ENCODE measurements at regions of chrX and their contacts with region 1.

Region 1: GRCh38 chrX:152904151-152905080 is 6.5 kb downstream of the ZNF185 start:
- H3K4me3 ChIP-seq: no peak overlapping the region
- H3K27ac ChIP-seq: no peak overlapping the region
- H3K4me1 ChIP-seq: no peaks in the 10 kb centered on the region
- CTCF ChIP-seq: peak; percentile 82

Region 2: GRCh38 chrX:152738560-152738959 is 165.9 kb before region 1 on chrX:
- CTCF ChIA-PET with region 1: no interaction called
- POLR2A ChIA-PET with region 1: no interaction called
- H3K4me3 ChIP-seq: no peak overlapping the region
- H3K27ac ChIP-seq: no peak overlapping the region
- H3K4me1 ChIP-seq: no peaks in the 10 kb centered on the region
- CTCF ChIP-seq: no peak

Region 3: DNA sequence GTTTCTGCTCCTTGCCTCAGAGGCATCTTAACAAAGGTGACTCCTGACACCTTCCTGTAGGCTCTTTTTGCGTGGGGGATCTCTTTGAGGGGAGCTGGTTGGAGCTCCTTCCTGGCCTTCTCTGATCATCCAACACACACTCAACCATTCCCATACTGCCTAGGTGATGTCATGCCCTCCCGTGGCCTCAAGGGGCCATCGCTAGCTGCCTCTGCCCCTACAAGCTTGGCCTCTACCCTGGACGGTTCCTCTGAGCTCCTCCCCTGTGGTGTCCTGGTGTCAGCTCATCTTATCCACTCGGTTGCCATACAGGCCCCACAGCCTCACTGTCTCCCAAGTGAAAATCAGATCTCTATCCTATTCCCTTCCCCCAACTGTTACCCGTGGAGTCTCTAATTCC is 20.2 kb before region 1 on chrX:
- CTCF ChIA-PET with region 1: interaction called, 12 read pairs
- POLR2A ChIA-PET with region 1: no interaction called
- H3K4me3 ChIP-seq: no peak overlapping the region
- H3K27ac ChIP-seq: no peak overlapping the region
- H3K4me1 ChIP-seq: no peaks in the 10 kb centered on the region
- CTCF ChIP-seq: no peak

Region 4: DNA sequence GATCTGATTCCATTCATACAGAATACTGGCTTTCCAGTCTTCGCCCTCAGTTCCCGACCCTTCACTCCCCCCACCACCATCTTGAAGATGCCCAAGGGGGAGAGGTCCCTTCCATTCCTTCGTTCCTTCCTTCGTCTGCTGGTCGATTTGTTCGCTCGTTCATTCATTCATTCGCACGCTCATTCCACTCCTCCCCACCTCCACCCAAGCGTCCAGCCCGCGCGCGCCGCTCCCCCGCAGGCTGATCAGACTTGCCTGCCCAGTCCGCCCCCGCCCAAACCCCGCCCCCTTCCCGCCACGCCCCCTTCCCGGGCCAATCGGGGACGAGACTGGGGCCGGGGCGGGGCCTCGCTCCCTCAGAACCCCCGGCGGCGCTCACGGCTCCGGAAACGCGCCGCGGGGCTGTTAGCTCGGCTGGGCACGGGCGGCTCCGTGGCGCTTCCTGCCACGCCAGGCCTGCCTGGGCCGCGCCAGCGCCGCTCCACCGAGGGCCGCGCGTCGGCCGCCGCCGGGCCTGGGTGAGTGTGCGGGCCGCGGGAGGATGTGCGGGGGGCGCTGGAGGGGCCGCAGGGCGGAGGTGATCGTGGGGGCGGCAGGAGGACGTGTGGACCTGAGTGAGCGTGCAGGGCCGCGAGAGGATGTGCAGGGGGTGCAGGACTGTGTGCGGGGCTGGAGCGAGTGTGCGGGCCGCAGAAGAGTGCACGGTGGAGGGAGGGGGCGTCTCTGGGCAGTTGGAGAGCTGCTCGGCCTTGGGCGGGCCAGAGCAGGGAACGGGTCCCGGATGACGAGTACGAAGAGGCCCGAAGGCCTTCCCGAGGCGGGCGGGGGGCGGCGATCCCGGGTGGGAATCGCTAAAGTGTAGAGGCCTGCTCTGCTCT is 429.6 kb after region 1 on chrX and contains the start of gene ZNF275:
- CTCF ChIA-PET with region 1: no interaction called
- POLR2A ChIA-PET with region 1: no interaction called
- H3K4me3 ChIP-seq: peak within 1 kb of the TSS; percentile 72
- H3K27ac ChIP-seq: peak within 1 kb of the TSS; percentile 71; the same call in 1 of the 2 replicates
- H3K4me1 ChIP-seq: no peaks in the 10 kb centered on the region
- CTCF ChIP-seq: peak; percentile 42; the same call in 1 of the 2 replicates